Activated CD4-positive, alpha-beta T cell treated with anti-CD3 and anti-CD28 coated beads for 36 hours (primary cell): ENCODE measurements at regions of chr12 and their contacts with region 1.

Region 1: DNA sequence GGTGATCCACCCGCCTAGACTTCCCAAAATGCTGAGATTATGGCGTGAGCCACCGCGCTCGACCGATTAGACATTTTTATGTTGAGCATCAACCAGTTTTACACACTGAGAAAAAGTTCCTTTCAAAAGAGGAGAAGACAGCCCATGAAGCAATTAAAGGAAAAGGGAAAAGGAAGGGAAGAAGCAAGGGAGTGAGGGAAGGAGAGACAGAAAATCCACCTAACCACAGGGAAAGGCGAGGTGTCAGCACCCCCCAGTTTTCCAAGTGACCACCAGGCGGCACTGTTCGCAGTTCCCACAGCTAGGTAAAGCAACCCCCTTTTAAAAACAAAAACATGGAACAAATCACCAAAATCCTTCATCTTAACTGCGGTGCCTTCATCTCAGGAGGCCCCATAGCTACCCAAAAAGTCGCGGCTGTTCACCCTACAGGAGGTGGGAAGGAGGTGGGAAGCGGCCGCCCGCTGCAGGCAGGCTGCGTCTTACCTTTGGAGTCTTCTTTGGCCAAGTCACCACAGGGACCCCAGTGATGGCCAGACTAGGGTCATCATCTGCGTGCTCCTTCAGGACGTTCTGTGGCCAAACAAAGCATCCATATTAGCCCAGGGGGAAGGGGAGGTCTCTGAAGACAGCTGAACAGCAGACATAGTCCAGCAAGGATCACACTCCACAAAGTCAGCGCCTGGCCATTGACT is 86.6 kb downstream of the KDM2B start:
- DNase-seq: peak; percentile 79
- ATAC-seq: peak; percentile 64
- H3K4me3 Mint-ChIP-seq: no peak overlapping the region
- H3K27ac Mint-ChIP-seq: no peak overlapping the region
- H3K4me1 Mint-ChIP-seq: peaks cover 9% of the 10 kb centered on the region
- H3K27me3 Mint-ChIP-seq: no peaks in the 10 kb centered on the region

Region 2: GRCh38 chr12:121483949-121484348 is 10.3 kb before region 1 on chr12:
- CTCF ChIA-PET with region 1: interaction called, 15 read pairs
- POLR2A ChIA-PET with region 1: no interaction called
- intact Hi-C with region 1: no loop called
- DNase-seq: no peak
- ATAC-seq: no peak
- H3K4me3 Mint-ChIP-seq: no peak overlapping the region
- H3K27ac Mint-ChIP-seq: no peak overlapping the region
- H3K4me1 Mint-ChIP-seq: no peaks in the 10 kb centered on the region
- H3K27me3 Mint-ChIP-seq: no peaks in the 10 kb centered on the region

Region 3: GRCh38 chr12:121678716-121679580 is 184.7 kb after region 1 on chr12:
- CTCF ChIA-PET with region 1: interaction called, 13 read pairs
- POLR2A ChIA-PET with region 1: no interaction called
- intact Hi-C with region 1: loop called (anchors 1 kb)
- DNase-seq: peak; percentile 32
- ATAC-seq: peak; percentile 21
- H3K4me3 Mint-ChIP-seq: no peak overlapping the region
- H3K27ac Mint-ChIP-seq: peak overlapping the region; percentile 23
- H3K4me1 Mint-ChIP-seq: peaks cover 7% of the 10 kb centered on the region
- H3K27me3 Mint-ChIP-seq: no peaks in the 10 kb centered on the region